ENCODE measurements at regions of chr10 and their contacts with region 1.

Region 1: DNA sequence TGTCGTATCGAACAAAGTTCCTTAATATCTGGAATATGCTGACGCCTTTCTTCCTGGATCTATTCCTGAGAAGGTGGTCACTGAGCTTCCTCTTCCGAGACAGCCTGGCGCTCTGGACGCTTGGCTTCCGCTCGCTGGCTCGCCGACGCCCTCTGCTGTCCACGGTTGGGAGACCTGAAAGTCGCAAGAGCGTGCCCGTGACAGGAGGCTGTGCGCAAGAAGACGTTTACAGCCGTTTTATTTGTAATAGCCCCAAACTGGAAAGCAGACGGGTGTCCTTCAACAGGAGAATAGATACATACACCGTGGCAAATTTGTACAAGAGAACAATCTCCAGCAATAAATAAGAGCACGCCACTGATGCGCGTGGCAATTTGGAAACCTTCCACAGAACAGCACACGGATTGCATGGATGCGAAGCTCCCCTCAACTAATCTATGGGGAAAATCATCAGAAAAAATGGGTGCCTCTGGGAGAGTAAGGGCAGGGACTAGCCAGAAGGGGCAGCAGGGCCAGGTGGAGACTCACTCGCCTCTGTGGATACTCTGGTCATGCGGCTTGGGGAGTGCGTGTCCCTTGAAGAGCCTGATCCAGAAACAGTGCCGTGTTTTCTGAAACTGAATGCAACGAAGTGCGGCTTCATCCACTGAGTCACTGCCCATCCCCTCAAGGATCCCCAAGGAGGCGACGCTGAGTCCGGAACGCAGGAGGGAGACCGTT is 41.5 kb upstream of the BNIP3 start:
- DNase-seq: peak; percentile 6
- H3K4me3 ChIP-seq: no peak overlapping the region
- H3K27me3 ChIP-seq: peaks cover 5% of the 10 kb centered on the region
- CTCF ChIP-seq: peak; percentile 94

Region 2: GRCh38 chr10:131874991-131875451 is 148.2 kb before region 1 on chr10:
- CTCF ChIA-PET with region 1: interaction called, 13 read pairs
- POLR2A ChIA-PET with region 1: no interaction called
- DNase-seq: peak; percentile 6
- H3K4me3 ChIP-seq: no peak overlapping the region
- H3K27me3 ChIP-seq: no peaks in the 10 kb centered on the region; the same call in 1 of the 2 replicates
- CTCF ChIP-seq: peak; percentile 76

Region 3: GRCh38 chr10:131885391-131886161 is 137.7 kb before region 1 on chr10:
- CTCF ChIA-PET with region 1: interaction called, 79 read pairs
- POLR2A ChIA-PET with region 1: no interaction called
- DNase-seq: no peak
- H3K4me3 ChIP-seq: no peak overlapping the region
- H3K27me3 ChIP-seq: peaks cover 3% of the 10 kb centered on the region
- CTCF ChIP-seq: peak; percentile 99

Region 4: GRCh38 chr10:131900350-131901146 is 122.7 kb before region 1 on chr10 and contains the start of gene PPP2R2D:
- CTCF ChIA-PET with region 1: interaction called, 16 read pairs
- POLR2A ChIA-PET with region 1: no interaction called
- DNase-seq: peak; percentile 17
- H3K4me3 ChIP-seq: peak within 1 kb of the TSS; percentile 84
- H3K27me3 ChIP-seq: peaks cover 10% of the 10 kb centered on the region
- CTCF ChIP-seq: no peak
- polyA plus RNA-seq, gene PPP2R2D: 27.6 and 31.2 TPM in 2 replicates

Region 5: DNA sequence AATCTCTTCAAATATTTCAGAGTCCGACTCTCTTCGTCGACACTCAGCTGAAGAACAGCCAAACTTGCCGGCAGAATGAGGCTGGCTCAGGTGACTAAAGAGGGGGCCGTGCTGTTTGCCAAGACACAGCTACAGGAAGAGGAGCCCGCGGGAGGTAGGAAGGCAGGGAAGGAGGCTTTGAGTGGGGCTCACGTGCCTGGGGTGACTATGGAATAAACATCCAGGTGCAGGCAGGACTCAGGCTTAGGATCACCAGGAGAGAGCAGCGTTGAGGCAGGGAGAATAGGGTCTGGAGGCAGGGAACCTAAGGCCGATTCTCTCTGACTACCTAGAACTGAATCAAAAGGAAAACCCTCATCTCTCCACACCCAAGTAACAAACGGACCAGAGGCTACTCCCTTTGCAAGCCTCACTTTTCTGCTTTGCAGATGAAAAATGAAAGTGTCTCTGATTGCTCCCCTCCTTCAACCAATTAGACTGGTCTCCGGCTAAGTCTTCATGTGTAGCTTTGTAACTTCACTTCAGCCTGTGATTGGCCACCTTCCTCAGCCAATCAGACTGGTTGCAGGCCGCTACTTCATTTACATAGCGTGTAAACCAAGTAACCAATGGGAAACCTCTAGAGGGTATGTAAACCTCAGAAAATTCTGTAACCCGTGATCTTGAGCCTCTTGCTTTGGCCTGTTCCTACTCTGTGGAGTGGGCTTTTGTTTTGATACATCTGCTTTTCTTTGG is 21.8 kb before region 1 on chr10:
- CTCF ChIA-PET with region 1: interaction called, 17 read pairs
- POLR2A ChIA-PET with region 1: no interaction called
- DNase-seq: no peak
- H3K4me3 ChIP-seq: no peak overlapping the region
- H3K27me3 ChIP-seq: peaks cover 7% of the 10 kb centered on the region
- CTCF ChIP-seq: no peak

Region 6: DNA sequence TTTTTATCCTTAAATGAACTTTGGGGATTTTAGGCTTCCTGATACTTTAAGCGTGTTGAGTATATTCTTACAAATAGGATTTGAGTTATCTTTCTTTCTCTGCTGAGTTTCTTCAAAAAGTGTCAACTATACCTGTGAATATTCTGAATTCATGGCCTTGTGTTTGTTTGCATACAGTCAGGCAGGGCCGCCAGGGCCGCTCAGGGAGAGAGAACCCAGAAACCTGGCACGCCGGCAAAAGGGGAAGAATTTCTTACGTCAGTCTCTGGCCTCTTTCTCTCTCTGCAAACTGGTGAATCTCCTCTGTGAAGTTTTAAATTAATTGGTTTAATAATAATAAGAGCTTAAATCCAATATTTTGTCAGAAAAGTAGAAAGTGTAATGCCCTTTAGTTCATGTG is 12.2 kb before region 1 on chr10:
- CTCF ChIA-PET with region 1: interaction called, 14 read pairs
- POLR2A ChIA-PET with region 1: no interaction called
- DNase-seq: no peak
- H3K4me3 ChIP-seq: no peak overlapping the region
- H3K27me3 ChIP-seq: peaks cover 6% of the 10 kb centered on the region
- CTCF ChIP-seq: no peak

Region 7: GRCh38 chr10:132036153-132036886 is 13.1 kb after region 1 on chr10:
- CTCF ChIA-PET with region 1: interaction called, 14 read pairs
- POLR2A ChIA-PET with region 1: no interaction called
- DNase-seq: no peak
- H3K4me3 ChIP-seq: peak overlapping the region; percentile 23
- H3K27me3 ChIP-seq: peaks cover 23% of the 10 kb centered on the region
- CTCF ChIP-seq: no peak

Region 8: GRCh38 chr10:132096223-132096622 is 73.0 kb after region 1 on chr10:
- CTCF ChIA-PET with region 1: no interaction called
- POLR2A ChIA-PET with region 1: no interaction called
- DNase-seq: peak; percentile 8
- H3K4me3 ChIP-seq: no peak overlapping the region
- H3K27me3 ChIP-seq: peaks cover 2% of the 10 kb centered on the region; the same call in 1 of the 2 replicates
- CTCF ChIP-seq: no peak

Measured in BJ (cell line).